ENCODE measurements at regions of chr1 and their contacts with region 1.

Region 1: GRCh38 chr1:91404151-91405012 is at the start of gene HFM1:
- DNase-seq: no peak
- ATAC-seq: peak; percentile 56
- H3K4me3 ChIP-seq: peak within 1 kb of the TSS; percentile 46
- H3K27ac ChIP-seq: no peak within 1 kb of the TSS
- H3K4me1 ChIP-seq: no peaks in the 10 kb centered on the region
- H3K27me3 ChIP-seq: peaks cover 74% of the 10 kb centered on the region
- CTCF ChIP-seq: no peak
- total RNA-seq, gene HFM1: not detected in 2 replicates

Region 2: GRCh38 chr1:90045853-90046563 is 1358.4 kb before region 1 on chr1:
- CTCF ChIA-PET with region 1: no interaction called
- POLR2A ChIA-PET with region 1: no interaction called
- intact Hi-C with region 1: loop called (anchors 5 kb)
- DNase-seq: peak; percentile 50
- ATAC-seq: peak; percentile 77
- H3K4me3 ChIP-seq: no peak overlapping the region
- H3K27ac ChIP-seq: no peak overlapping the region
- H3K4me1 ChIP-seq: no peaks in the 10 kb centered on the region
- H3K27me3 ChIP-seq: peaks cover 18% of the 10 kb centered on the region
- CTCF ChIP-seq: peak; percentile 73

Region 3: GRCh38 chr1:90579212-90579802 is 825.1 kb before region 1 on chr1:
- CTCF ChIA-PET with region 1: no interaction called
- POLR2A ChIA-PET with region 1: no interaction called
- intact Hi-C with region 1: loop called (anchors 10 kb)
- DNase-seq: peak; percentile 72
- ATAC-seq: peak; percentile 68; the same call in 1 of the 2 replicates
- H3K4me3 ChIP-seq: no peak overlapping the region
- H3K27ac ChIP-seq: no peak overlapping the region
- H3K4me1 ChIP-seq: no peaks in the 10 kb centered on the region
- H3K27me3 ChIP-seq: peaks cover 29% of the 10 kb centered on the region
- CTCF ChIP-seq: peak; percentile 75

Region 4: GRCh38 chr1:91045284-91045683 is 359.1 kb before region 1 on chr1:
- CTCF ChIA-PET with region 1: no interaction called
- POLR2A ChIA-PET with region 1: no interaction called
- intact Hi-C with region 1: no loop called
- DNase-seq: no peak
- ATAC-seq: no peak
- H3K4me3 ChIP-seq: no peak overlapping the region
- H3K27ac ChIP-seq: no peak overlapping the region
- H3K4me1 ChIP-seq: no peaks in the 10 kb centered on the region
- H3K27me3 ChIP-seq: peaks cover 8% of the 10 kb centered on the region
- CTCF ChIP-seq: no peak

Region 5: DNA sequence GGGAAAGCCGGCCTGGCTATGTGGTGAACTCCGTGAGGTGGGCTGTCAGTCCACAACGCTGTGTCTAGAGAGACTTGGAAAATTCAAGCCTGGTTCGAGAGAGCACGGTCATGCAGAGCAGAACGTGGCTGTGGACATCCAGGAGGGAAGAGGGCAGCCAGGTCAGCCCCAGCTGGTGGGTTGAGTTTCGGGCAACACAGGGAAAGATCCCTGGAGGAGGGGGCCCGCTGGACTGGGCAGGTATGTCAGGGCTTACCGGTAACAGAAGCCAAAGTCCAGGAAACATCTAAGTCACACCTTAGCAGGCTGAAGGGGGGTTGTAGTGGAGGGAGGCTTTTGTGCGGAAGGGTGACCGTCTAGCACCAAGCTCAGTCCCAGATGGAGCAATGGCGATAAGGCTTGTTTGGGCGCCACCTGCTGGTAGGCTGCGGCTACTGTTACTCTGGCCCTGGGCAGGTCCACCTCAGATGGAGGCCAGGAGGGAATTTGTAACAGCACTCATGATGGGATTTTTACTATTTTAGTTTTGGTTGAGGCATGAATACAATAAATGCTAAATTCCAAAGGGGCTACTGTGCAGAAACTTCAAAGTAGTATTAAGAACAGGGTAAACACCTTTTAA is 239.2 kb before region 1 on chr1:
- CTCF ChIA-PET with region 1: no interaction called
- POLR2A ChIA-PET with region 1: no interaction called
- intact Hi-C with region 1: loop called (anchors 5 kb)
- DNase-seq: peak; percentile 75
- ATAC-seq: peak; percentile 95
- H3K4me3 ChIP-seq: no peak overlapping the region
- H3K27ac ChIP-seq: no peak overlapping the region
- H3K4me1 ChIP-seq: no peaks in the 10 kb centered on the region
- H3K27me3 ChIP-seq: 0 out of 2 replicates have a peak, but pooled peaks cover 8% of the 10 kb centered on the region
- CTCF ChIP-seq: peak; percentile 94

Region 6: DNA sequence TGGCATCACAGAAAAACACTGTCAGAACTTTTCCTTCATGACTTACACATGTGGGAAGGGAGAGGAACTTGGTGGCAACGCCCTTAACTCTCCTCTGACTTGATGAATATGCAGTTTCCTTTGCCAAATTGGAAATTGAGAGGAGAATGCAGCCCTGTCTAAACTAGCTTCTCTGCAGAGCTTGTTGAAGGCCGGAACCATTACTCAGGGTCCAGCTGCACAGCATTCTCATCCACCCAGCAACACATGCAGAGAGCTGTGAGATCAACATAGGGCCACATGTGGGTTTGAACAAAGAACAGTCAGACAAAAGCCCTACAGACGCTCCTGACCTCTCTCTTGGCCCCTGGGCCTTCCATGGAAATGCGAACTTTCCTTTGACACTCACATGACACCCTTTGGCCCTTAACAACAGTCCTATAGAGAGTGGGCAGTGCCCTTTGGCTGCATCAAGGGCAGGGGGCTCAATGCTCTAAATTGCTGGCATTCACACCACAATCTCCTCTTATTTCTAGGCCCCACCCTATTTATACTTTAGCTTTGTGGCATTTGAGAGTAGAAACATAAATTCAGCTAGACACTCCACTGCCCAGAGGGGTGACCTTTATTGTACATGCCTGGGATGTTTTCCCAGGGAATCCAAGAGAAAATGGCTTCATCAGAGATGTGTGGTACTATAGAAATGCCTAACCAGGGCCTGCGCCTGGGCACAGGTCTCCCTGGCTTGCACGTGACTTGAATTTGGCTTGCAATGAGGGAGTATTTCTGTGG is 160.7 kb after region 1 on chr1:
- CTCF ChIA-PET with region 1: no interaction called
- POLR2A ChIA-PET with region 1: no interaction called
- intact Hi-C with region 1: no loop called
- DNase-seq: no peak
- ATAC-seq: no peak
- H3K4me3 ChIP-seq: no peak overlapping the region
- H3K27ac ChIP-seq: no peak overlapping the region
- H3K4me1 ChIP-seq: peaks cover 16% of the 10 kb centered on the region
- H3K27me3 ChIP-seq: no peaks in the 10 kb centered on the region
- CTCF ChIP-seq: no peak

Measured in PC-3 (cell line).